ENCODE measurements at regions of chr10 and their contacts with region 1.

Region 1: DNA sequence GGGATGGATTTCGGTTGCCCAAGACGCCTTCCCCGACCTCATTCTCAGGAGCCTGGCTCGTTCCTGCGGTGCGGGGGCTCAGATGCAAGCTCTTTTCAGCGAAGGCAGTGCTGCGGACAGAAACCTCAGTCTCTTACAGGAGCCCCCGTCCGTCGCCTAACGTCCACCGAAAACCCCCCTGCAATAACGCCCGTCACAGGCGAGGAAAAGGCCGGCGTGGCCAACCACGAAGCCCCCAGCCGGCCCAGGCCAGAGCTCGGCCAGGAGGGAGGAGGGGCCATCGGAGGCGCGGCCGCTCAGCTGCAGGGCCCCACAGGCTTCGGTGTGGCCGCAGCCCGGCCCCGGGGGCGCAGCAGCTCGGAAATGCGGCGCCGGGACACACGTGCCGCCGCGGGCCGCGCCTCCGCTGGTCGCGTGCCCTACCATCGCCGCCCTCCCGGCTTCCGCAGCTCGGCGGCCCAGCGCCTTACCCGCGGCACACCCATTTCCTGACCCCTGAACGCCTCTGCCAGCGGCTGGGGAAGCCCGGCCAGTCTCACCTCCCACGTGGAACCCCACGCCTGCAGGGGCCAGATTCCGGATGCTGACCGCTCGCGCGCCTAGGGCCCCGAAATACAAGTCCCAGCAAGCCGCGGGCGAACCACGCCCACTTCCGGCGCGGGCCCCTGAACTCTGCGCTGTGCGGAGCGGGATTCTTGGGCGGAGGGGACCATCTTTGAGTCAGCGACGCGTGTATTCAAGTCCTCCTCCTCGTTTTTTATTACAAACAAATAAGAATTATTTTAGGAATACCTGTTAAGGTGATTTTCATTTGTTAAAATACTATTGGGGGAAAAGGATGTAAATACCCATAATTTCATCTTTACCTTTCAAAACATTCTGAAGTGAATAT is at the start of gene ZNF239:
- DNase-seq: peak; percentile 48
- H3K4me3 Mint-ChIP-seq: peak within 1 kb of the TSS; percentile 57
- H3K27ac Mint-ChIP-seq: peak within 1 kb of the TSS; percentile 45
- H3K4me1 Mint-ChIP-seq: peaks cover 17% of the 10 kb centered on the region
- H3K27me3 Mint-ChIP-seq: no peaks in the 10 kb centered on the region
- total RNA-seq, gene ZNF239: 1.4 and 1.7 TPM in 2 replicates

Region 2: DNA sequence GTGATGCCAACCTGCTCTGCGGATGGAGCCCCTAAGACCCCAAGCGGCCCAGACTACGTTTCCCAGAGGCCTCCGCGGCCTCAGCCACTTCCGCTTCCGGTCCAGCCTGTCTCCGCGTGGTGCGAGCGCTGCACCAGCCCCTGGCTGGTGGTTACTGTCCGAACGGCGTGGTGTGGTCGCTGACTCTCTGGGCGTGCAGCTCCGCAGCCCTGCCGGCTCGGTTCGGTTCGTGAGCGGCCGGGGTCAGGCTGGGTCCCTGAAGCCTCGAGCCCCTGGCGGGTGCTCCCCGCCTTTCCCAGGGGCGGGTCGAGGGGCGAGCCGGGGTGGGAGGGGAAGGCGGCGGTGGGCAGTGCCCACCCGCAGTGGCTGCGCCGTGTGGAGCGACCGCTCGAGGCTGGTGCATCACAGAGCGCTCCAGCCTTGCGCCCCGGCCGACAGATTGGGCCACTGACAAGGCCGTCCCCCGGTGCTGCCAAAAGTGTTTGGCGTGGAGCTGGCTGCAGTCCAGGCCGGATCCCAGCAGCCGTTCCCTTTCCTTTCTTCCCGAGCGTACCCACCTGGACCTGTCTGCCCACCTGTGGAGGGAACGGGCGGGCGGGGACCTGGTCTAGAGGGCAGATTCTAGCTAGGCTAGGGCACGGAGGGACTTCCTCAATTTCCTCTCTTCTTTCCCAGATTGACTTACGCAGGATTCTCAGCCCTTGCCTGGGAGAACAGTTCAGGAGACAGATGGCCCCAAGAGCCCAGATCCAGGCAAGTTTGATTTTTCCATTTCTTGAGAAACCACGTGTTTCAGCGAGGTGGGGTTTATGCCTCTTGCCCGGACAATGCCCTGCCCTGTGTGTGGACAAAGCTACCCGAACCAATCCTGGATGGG is 32.3 kb after region 1 on chr10 and contains the start of gene ZNF485:
- intact Hi-C with region 1: loop called (anchors 5 kb)
- DNase-seq: peak; percentile 34
- H3K4me3 Mint-ChIP-seq: peak within 1 kb of the TSS; percentile 84
- H3K27ac Mint-ChIP-seq: peak within 1 kb of the TSS; percentile 53
- H3K4me1 Mint-ChIP-seq: peaks cover 26% of the 10 kb centered on the region
- H3K27me3 Mint-ChIP-seq: no peaks in the 10 kb centered on the region
- total RNA-seq, gene ZNF485: 5.7 and 6.6 TPM in 2 replicates

Region 3: DNA sequence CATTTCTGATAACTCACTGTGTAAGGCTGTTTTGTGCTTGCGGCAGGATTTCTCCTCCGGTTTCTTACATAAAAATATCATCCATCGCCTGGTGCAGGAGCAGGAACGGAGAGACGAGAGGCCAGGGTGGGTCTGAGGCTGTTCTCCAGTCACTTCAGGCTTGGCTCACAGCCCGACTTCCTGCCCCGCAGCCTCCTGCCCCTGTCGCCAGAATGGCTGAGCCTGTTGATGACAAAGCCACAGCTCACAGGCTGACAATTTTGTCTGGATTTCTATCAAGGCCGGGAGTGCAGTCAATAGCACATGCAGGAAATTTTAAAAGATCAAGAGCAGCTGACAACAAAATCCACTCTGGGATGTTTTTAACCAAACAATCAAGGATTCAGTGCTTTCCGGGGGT is 304.1 kb after region 1 on chr10:
- intact Hi-C with region 1: no loop called
- DNase-seq: no peak
- H3K4me3 Mint-ChIP-seq: no peak overlapping the region
- H3K27ac Mint-ChIP-seq: no peak overlapping the region
- H3K4me1 Mint-ChIP-seq: no peaks in the 10 kb centered on the region
- H3K27me3 Mint-ChIP-seq: peaks cover 5% of the 10 kb centered on the region

Measured in activated T-helper 1 cell treated with anti-CD3 and anti-CD28 coated beads, Interleukin-12 subunit alpha, Interleukin-12 subunit beta, Interleukin-2, Interleukin-4 antibody, amounts not matched to agents 30 ng/mL and 10 ng/mL and 1 ng/mL, durations not matched to agents 14 hours and 24 hours and 36 hours (primary cell).